H1 (cell line): ENCODE measurements at regions of chr3 and their contacts with region 1.

Region 1: GRCh38 chr3:101561630-101562328 is at the start of gene TRMT10C:
- DNase-seq: peak; percentile 76 to 93
- H3K4me3 ChIP-seq: peak within 1 kb of the TSS; percentile 86 to 98 (median 98)
- H3K27ac ChIP-seq: peak within 1 kb of the TSS; percentile 93
- H3K4me1 ChIP-seq: peaks cover 0 to 6% (median 2%) of the 10 kb centered on the region in 4 experiments; a peak in 3 of 7 replicates
- H3K27me3 ChIP-seq: no peaks in the 10 kb centered on the region
- CTCF ChIP-seq: no peak
- EP300 ChIP-seq: no peak
- POLR2A ChIP-seq: peak; percentile 93 to 98
- RAD21 ChIP-seq: peak in 1 of 2 experiments; percentile 30; a peak in 1 of 4 replicates
- total RNA-seq, gene TRMT10C: 49.4 and 55.9 TPM in 2 replicates

Region 2: GRCh38 chr3:101512646-101513418 is 48.9 kb before region 1 on chr3 and contains the start of gene SENP7:
- CTCF ChIA-PET with region 1: interaction called, 3 read pairs
- POLR2A ChIA-PET with region 1: interaction called, 11 read pairs
- DNase-seq: peak; percentile 53 to 81
- H3K4me3 ChIP-seq: peak within 1 kb of the TSS; percentile 66 to 80 (median 78)
- H3K27ac ChIP-seq: peak within 1 kb of the TSS; percentile 33; the same call in 1 of the 2 replicates
- H3K4me1 ChIP-seq: no peaks in the 10 kb centered on the region; a peak in 3 of 7 replicates
- H3K27me3 ChIP-seq: no peaks in the 10 kb centered on the region
- CTCF ChIP-seq: no peak
- EP300 ChIP-seq: peak in 1 of 2 experiments; percentile 38; a peak in 1 of 3 replicates
- POLR2A ChIP-seq: peak in 1 of 2 experiments; percentile 16; a peak in 2 of 3 replicates
- RAD21 ChIP-seq: peak; percentile 1 to 31; a peak in 1 of 4 replicates
- total RNA-seq, gene SENP7: 6.5 and 7.8 TPM in 2 replicates

Region 3: DNA sequence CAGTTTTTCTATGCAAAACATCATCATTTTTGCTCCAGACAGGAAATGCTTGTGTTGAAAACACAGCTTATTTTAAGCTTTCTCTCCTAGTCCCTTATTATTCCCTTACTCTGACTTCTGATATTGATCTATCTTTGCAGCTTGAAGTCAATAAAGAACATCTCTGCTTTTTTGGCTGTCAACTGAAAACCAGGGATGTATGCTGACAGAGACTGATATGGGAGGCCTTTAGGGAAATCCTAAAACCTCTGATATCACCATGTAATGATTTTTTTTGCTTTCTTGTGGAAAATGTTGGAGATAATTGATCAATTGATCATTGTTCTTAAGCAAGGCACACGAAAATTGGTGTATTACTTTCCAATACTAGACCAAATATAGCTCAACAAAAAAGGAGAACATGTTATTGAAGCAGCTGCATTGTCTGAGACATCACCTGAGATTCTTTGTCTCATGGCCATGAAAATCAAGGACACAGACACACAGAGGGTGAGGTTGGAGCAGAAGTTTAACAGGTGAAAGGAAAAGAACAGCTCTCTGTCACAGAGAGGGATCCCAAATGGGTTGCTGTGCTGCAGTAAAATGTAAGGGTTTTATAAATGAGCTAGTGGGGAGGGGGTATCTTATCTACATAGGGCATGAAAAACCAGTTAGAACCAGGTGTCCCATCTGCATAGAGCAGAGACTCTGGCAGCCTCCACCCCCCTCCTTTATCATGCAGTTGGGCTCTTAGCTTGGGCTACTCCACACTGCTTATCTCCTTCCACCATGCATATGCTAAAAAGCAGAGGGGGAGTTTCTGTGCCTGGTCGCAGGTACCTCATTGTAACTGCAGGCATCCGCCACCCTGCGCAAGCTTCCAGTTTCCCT is 31.7 kb before region 1 on chr3:
- CTCF ChIA-PET with region 1: no interaction called
- POLR2A ChIA-PET with region 1: interaction called, 14 read pairs
- DNase-seq: peak; percentile 51 to 57
- H3K4me3 ChIP-seq: peak overlapping the region in 1 of 4 experiments; percentile 39; a peak in 1 of 8 replicates
- H3K27ac ChIP-seq: peak overlapping the region; percentile 65; the same call in 1 of the 2 replicates
- H3K4me1 ChIP-seq: peaks cover 6 to 21% (median 14%) of the 10 kb centered on the region in 4 experiments; a peak in 6 of 7 replicates
- H3K27me3 ChIP-seq: no peaks in the 10 kb centered on the region
- CTCF ChIP-seq: no peak
- EP300 ChIP-seq: peak in 1 of 2 experiments; percentile 50; a peak in 1 of 3 replicates
- POLR2A ChIP-seq: peak; percentile 67 to 88
- RAD21 ChIP-seq: peak; percentile 22 to 25

Region 4: GRCh38 chr3:101573449-101574387 is 11.9 kb after region 1 on chr3 and contains the start of gene PCNP:
- CTCF ChIA-PET with region 1: interaction called, 13 read pairs
- POLR2A ChIA-PET with region 1: interaction called, 60 read pairs
- DNase-seq: peak; percentile 90 to 98
- H3K4me3 ChIP-seq: peak within 1 kb of the TSS; percentile 82 to 98 (median 91)
- H3K27ac ChIP-seq: peak within 1 kb of the TSS; percentile 96
- H3K4me1 ChIP-seq: peaks cover 0 to 3% (median 0%) of the 10 kb centered on the region in 4 experiments; a peak in 2 of 7 replicates
- H3K27me3 ChIP-seq: no peaks in the 10 kb centered on the region; a peak in 1 of 7 replicates
- CTCF ChIP-seq: peak in 2 of 3 experiments; percentile 58 to 80; a peak in 3 of 4 replicates
- EP300 ChIP-seq: peak in 1 of 2 experiments; percentile 53; a peak in 1 of 3 replicates
- POLR2A ChIP-seq: peak; percentile 85 to 93
- RAD21 ChIP-seq: peak; percentile 68 to 73
- total RNA-seq, gene PCNP: 188 and 192 TPM in 2 replicates

Region 5: DNA sequence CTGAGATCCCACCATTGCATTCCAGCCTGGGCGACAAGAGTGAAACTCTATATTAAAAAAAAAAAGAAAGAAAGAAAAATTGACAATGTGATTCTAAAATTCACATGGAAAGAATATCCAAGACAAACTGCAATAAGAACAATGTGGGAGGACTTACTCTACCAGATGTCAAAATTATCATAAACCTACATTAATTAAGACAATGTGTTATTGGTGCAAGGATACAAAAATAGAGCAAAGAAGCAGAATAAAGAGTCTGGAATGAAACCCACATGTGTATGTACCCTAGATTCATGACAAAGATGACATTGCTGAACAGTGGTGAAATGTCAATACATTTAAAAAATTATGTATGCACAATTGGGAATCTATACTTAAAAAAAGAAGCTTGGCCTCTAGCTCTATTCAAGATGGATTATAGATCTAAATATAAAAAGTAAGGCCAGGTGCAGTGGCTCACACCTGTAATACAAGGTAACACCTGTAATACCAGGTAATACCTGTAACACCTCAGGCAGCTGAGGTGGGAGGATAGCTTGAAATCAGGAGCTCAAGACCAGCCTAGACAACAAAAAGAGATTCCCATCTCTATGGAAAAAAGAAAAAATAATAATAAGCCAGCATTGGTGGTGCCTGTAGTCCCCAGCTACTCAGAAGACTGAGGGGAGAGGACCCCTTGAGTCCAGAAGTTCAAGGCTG is 69.5 kb after region 1 on chr3:
- CTCF ChIA-PET with region 1: no interaction called
- POLR2A ChIA-PET with region 1: no interaction called
- DNase-seq: no peak
- H3K4me3 ChIP-seq: no peak overlapping the region
- H3K27ac ChIP-seq: no peak overlapping the region
- H3K4me1 ChIP-seq: peaks cover 0 to 2% (median 0%) of the 10 kb centered on the region in 4 experiments; a peak in 1 of 7 replicates
- H3K27me3 ChIP-seq: no peaks in the 10 kb centered on the region
- CTCF ChIP-seq: no peak
- EP300 ChIP-seq: no peak
- POLR2A ChIP-seq: no peak
- RAD21 ChIP-seq: no peak